Right lobe of liver (tissue), 6 donors: ENCODE measurements at regions of chr10 and their contacts with region 1.

Region 1: GRCh38 chr10:80260295-80261243 is 28.9 kb downstream of the MAT1A start:
- DNase-seq: peak in 1 of 3 donors; percentile 21
- ATAC-seq: peak; percentile 55 to 71 (median 64)
- H3K4me3 ChIP-seq: no peak overlapping the region
- H3K27ac ChIP-seq: no peak overlapping the region
- H3K4me1 ChIP-seq: no peaks in the 10 kb centered on the region
- H3K27me3 ChIP-seq: no peaks in the 10 kb centered on the region
- CTCF ChIP-seq: peak; percentile 74 to 84 (median 82)
- POLR2A ChIP-seq: no peak

Region 2: GRCh38 chr10:80324086-80324485 is 63.5 kb after region 1 on chr10:
- intact Hi-C with region 1: loop called in 1 of 2 experiments (anchors 10 kb)
- DNase-seq: peak in 1 of 3 donors; percentile 35
- ATAC-seq: peak in 1 of 4 donors; percentile 20
- H3K4me3 ChIP-seq: no peak overlapping the region
- H3K27ac ChIP-seq: peak overlapping the region; percentile 26 to 92 (median 91)
- H3K4me1 ChIP-seq: peaks cover 0 to 51% (median 9%) of the 10 kb centered on the region in 4 donors
- H3K27me3 ChIP-seq: no peaks in the 10 kb centered on the region
- CTCF ChIP-seq: no peak
- POLR2A ChIP-seq: no peak